Mammary epithelial cell (primary cell): ENCODE measurements at regions of chr3 and their contacts with region 1.

Region 1: DNA sequence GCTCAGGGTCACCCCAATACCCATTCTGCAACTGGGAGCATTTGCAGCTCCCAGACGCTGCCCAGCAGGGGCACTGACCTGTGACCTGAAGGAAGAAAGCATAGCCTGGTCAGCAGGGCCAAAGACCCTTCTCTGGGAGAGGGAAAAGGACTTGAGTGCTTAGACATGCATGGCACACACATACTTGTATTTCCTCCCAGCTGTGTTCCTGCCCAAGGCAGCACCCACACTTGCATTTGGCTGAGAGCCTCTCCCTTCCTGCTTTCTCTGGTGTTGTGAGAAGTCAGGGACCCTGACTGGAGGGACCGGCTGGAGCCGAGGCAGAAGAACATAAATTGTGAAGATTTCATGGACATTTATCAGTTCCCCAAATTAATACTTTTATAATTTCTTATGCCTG is 7.2 kb upstream of the LAMB2 start:
- DNase-seq: no peak
- H3K4me3 ChIP-seq: no peak overlapping the region
- H3K27ac ChIP-seq: no peak overlapping the region
- H3K4me1 ChIP-seq: no peaks in the 10 kb centered on the region
- H3K27me3 ChIP-seq: no peaks in the 10 kb centered on the region
- CTCF ChIP-seq: no peak

Region 2: GRCh38 chr3:48826451-48826850 is 313.6 kb before region 1 on chr3:
- CTCF ChIA-PET with region 1: no interaction called
- dilution Hi-C with region 1: no loop called
- in situ Hi-C with region 1: no loop called
- intact Hi-C with region 1: no loop called
- DNase-seq: no peak
- H3K4me3 ChIP-seq: no peak overlapping the region
- H3K27ac ChIP-seq: no peak overlapping the region
- H3K4me1 ChIP-seq: no peaks in the 10 kb centered on the region
- H3K27me3 ChIP-seq: no peaks in the 10 kb centered on the region
- CTCF ChIP-seq: no peak

Region 3: GRCh38 chr3:49305608-49306007 is 165.5 kb after region 1 on chr3:
- CTCF ChIA-PET with region 1: no interaction called
- dilution Hi-C with region 1: loop called (anchors 5 kb)
- in situ Hi-C with region 1: no loop called
- intact Hi-C with region 1: no loop called
- DNase-seq: no peak
- H3K4me3 ChIP-seq: no peak overlapping the region
- H3K27ac ChIP-seq: no peak overlapping the region
- H3K4me1 ChIP-seq: no peaks in the 10 kb centered on the region
- H3K27me3 ChIP-seq: no peaks in the 10 kb centered on the region
- CTCF ChIP-seq: no peak